AG04450 (cell line): ENCODE measurements at regions of chr1 and their contacts with region 1.

Region 1: GRCh38 chr1:174982971-174983689 is 16.6 kb upstream of the CACYBP start:
- DNase-seq: no peak
- H3K4me3 ChIP-seq: no peak overlapping the region
- H3K27ac ChIP-seq: no peak overlapping the region
- H3K27me3 ChIP-seq: no peaks in the 10 kb centered on the region
- CTCF ChIP-seq: peak; percentile 58

Region 2: GRCh38 chr1:173002891-173003838 is 1980.0 kb before region 1 on chr1:
- CTCF ChIA-PET with region 1: interaction called, 11 read pairs
- POLR2A ChIA-PET with region 1: no interaction called
- DNase-seq: peak; percentile 57
- H3K4me3 ChIP-seq: no peak overlapping the region
- H3K27ac ChIP-seq: no peak overlapping the region
- H3K27me3 ChIP-seq: no peaks in the 10 kb centered on the region
- CTCF ChIP-seq: no peak

Region 3: DNA sequence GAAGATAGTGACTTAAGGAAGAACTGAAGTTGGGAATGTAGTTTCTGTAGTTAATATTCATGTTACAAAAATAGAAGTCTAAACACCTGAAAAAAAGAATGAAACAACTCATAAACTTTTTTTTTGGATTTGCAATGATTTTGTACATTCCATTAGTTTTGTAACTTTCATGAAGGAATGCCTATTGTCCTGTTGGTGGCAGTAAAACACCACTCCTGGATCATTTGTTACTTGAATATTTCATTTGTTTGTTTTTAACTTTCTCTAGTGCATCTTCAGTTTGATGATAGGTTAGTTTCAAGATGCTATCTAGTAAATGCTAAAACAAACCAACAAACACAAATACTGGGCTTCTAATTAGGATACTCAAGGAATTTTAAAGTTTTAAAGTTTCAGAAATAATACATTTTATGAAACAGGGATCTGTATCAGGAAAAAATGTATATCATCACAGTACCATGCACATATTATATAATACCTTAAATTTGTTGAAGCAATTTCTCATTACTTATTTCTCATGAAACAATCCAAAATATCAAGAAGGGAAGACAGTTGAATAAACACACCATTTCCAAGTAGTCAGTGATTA is 213.1 kb before region 1 on chr1:
- CTCF ChIA-PET with region 1: interaction called, 24 read pairs
- POLR2A ChIA-PET with region 1: no interaction called
- DNase-seq: peak; percentile 20
- H3K4me3 ChIP-seq: no peak overlapping the region
- H3K27ac ChIP-seq: no peak overlapping the region
- H3K27me3 ChIP-seq: no peaks in the 10 kb centered on the region
- CTCF ChIP-seq: peak; percentile 78

Region 4: GRCh38 chr1:174841747-174842146 is 141.4 kb before region 1 on chr1:
- CTCF ChIA-PET with region 1: no interaction called
- POLR2A ChIA-PET with region 1: no interaction called
- DNase-seq: no peak
- H3K4me3 ChIP-seq: no peak overlapping the region
- H3K27ac ChIP-seq: no peak overlapping the region
- H3K27me3 ChIP-seq: no peaks in the 10 kb centered on the region
- CTCF ChIP-seq: no peak

Region 5: GRCh38 chr1:174957829-174958228 is 25.3 kb before region 1 on chr1:
- CTCF ChIA-PET with region 1: interaction called, 11 read pairs
- POLR2A ChIA-PET with region 1: no interaction called
- DNase-seq: no peak
- H3K4me3 ChIP-seq: no peak overlapping the region
- H3K27ac ChIP-seq: no peak overlapping the region
- H3K27me3 ChIP-seq: no peaks in the 10 kb centered on the region
- CTCF ChIP-seq: no peak

Region 6: DNA sequence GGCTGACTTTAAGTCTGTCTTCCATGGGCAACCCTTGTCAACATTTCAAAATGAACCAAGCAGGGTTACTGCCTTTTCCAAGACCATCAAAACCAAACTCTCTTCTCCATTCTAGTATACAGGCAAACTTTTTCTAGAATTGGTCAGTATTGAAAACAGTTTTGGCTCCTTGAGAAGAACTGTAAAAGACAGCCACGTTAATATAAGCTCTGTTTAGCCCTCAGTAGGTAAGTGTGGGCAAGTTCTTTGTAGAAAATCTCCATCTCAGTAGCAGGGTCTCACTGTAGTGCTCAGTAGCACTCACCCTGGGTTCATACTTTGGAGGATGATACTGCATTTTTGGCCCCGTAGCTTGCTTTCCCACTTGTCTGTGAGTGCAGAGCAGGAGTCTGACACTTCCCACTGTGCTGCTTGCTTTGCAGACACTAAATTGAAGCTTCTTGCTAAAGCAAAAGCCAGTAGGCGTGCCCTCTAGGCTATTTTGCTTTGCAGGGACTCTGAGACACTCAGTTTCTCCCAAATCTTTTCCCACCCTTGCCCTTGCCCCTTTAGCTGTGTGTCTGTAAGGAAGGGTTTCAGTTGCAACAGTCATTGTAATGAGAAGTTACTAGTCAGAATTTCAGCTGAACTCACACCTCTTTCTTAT is 17.6 kb before region 1 on chr1:
- CTCF ChIA-PET with region 1: interaction called, 12 read pairs
- POLR2A ChIA-PET with region 1: no interaction called
- DNase-seq: no peak
- H3K4me3 ChIP-seq: no peak overlapping the region
- H3K27ac ChIP-seq: no peak overlapping the region
- H3K27me3 ChIP-seq: peaks cover 9% of the 10 kb centered on the region
- CTCF ChIP-seq: no peak

Region 7: GRCh38 chr1:175015243-175015642 is 32.1 kb after region 1 on chr1:
- CTCF ChIA-PET with region 1: no interaction called
- POLR2A ChIA-PET with region 1: no interaction called
- DNase-seq: no peak
- H3K4me3 ChIP-seq: no peak overlapping the region; the same call in 1 of the 2 replicates
- H3K27ac ChIP-seq: peak overlapping the region; percentile 74
- H3K27me3 ChIP-seq: no peaks in the 10 kb centered on the region
- CTCF ChIP-seq: no peak